CD8-positive, alpha-beta memory T cell (primary cell): ENCODE measurements at regions of chr7 and their contacts with region 1.

Region 1: GRCh38 chr7:8190119-8190895 is 71.7 kb downstream of the ICA1 start:
- DNase-seq: peak; percentile 38 to 74 (median 54)
- H3K4me3 ChIP-seq: no peak overlapping the region
- H3K4me3 Mint-ChIP-seq: no peak overlapping the region
- H3K27ac ChIP-seq: no peak overlapping the region
- H3K27ac Mint-ChIP-seq: no peak overlapping the region
- H3K4me1 ChIP-seq: peaks cover 9% of the 10 kb centered on the region
- H3K4me1 Mint-ChIP-seq: peaks cover 18 to 28% (median 23%) of the 10 kb centered on the region in 3 donors
- H3K27me3 ChIP-seq: no peaks in the 10 kb centered on the region
- H3K27me3 Mint-ChIP-seq: peaks cover 0 to 9% of the 10 kb centered on the region in 2 donors

Region 2: DNA sequence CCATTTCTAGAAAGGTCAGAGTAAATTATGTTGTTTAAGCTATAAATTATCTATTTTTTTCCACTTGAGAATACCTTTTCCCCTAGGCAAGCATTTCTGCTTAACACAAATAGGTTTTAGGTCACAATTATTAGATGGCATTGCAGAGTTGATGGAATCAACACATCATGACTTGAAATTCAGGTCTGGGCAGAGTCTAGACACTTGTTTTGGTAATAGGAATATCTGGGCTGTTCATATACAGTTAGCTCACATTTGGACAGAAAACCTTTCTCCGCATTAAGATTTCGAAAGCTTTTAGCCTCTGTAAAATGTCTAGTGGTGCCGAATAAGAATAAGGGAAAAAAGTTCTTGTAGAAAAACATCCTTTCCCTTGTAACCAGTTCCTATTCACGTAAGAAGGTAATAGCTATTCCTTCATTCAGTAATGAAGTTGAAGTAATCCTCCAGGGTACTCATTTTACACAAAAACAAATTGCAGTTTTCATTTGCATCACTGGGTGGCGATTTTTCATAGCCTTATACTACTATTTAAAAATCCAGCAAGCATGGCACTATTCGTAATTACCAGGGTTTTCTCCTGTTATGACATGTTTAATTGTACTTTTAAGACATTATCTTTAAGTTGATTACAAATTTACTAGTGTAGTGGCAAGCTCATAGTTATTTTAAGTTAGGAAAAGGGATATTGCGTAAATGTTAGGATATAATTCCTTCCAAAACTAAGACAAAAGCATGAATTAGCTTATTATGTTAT is 508.9 kb before region 1 on chr7:
- CTCF ChIA-PET with region 1: interaction called, 16 read pairs
- POLR2A ChIA-PET with region 1: interaction called, 3 read pairs
- DNase-seq: peak in 3 of 5 donors; percentile 14 to 47 (median 41)
- H3K4me3 ChIP-seq: no peak overlapping the region
- H3K4me3 Mint-ChIP-seq: peak overlapping the region in 2 of 7 donors; percentile 16 to 35
- H3K27ac ChIP-seq: no peak overlapping the region
- H3K27ac Mint-ChIP-seq: peak overlapping the region in 5 of 8 donors; percentile 6 to 69 (median 30)
- H3K4me1 ChIP-seq: peaks cover 8% of the 10 kb centered on the region
- H3K4me1 Mint-ChIP-seq: peaks cover 30 to 39% (median 31%) of the 10 kb centered on the region in 3 donors
- H3K27me3 ChIP-seq: no peaks in the 10 kb centered on the region
- H3K27me3 Mint-ChIP-seq: no peaks in the 10 kb centered on the region

Region 3: DNA sequence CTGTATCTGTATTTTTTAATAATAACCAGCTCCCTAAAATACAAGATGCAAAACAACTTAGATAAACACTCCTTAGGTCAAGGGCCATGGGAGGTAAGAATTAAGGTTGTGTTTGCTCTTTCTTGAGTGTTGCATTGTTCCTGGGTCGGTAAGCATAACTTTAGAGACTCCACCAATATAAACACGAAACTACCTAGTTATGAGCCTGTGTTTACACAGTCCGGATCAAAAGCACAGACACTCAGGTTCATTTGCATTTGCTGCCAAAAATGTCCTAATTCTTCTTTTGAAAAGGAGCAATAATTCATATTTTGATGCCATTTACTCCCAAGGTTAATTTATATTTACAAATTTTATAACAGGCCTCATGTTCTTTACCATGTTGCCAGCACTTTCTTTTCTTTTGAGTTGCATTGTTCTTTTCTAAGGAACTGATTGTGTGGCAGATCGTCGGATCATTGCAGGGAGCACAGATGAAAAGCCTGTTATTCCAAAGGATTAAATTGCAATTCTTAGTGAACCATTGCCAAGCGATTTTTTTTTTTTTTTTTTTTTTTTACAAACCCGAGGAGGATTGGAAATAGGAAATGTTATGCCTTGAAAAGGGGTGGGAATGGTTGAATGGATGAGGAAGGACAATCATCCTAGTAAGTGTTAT is 267.4 kb before region 1 on chr7:
- CTCF ChIA-PET with region 1: no interaction called
- POLR2A ChIA-PET with region 1: interaction called, 19 read pairs
- DNase-seq: no peak
- H3K4me3 ChIP-seq: no peak overlapping the region
- H3K4me3 Mint-ChIP-seq: peak overlapping the region in 1 of 7 donors; percentile 17
- H3K27ac ChIP-seq: no peak overlapping the region
- H3K27ac Mint-ChIP-seq: peak overlapping the region in 1 of 8 donors; percentile 22
- H3K4me1 ChIP-seq: no peaks in the 10 kb centered on the region
- H3K4me1 Mint-ChIP-seq: peaks cover 29 to 54% (median 49%) of the 10 kb centered on the region in 3 donors
- H3K27me3 ChIP-seq: no peaks in the 10 kb centered on the region
- H3K27me3 Mint-ChIP-seq: no peaks in the 10 kb centered on the region

Region 4: GRCh38 chr7:7944619-7945282 is 245.6 kb before region 1 on chr7:
- CTCF ChIA-PET with region 1: no interaction called
- POLR2A ChIA-PET with region 1: no interaction called
- DNase-seq: peak; percentile 21 to 73 (median 54)
- H3K4me3 ChIP-seq: peak overlapping the region; percentile 48
- H3K4me3 Mint-ChIP-seq: peak overlapping the region; percentile 47 to 87 (median 80)
- H3K27ac ChIP-seq: peak overlapping the region; percentile 43
- H3K27ac Mint-ChIP-seq: peak overlapping the region; percentile 84 to 98 (median 94)
- H3K4me1 ChIP-seq: peaks cover 36% of the 10 kb centered on the region
- H3K4me1 Mint-ChIP-seq: peaks cover 45 to 48% (median 47%) of the 10 kb centered on the region in 3 donors
- H3K27me3 ChIP-seq: no peaks in the 10 kb centered on the region
- H3K27me3 Mint-ChIP-seq: peaks cover 0 to 1% of the 10 kb centered on the region in 2 donors

Region 5: DNA sequence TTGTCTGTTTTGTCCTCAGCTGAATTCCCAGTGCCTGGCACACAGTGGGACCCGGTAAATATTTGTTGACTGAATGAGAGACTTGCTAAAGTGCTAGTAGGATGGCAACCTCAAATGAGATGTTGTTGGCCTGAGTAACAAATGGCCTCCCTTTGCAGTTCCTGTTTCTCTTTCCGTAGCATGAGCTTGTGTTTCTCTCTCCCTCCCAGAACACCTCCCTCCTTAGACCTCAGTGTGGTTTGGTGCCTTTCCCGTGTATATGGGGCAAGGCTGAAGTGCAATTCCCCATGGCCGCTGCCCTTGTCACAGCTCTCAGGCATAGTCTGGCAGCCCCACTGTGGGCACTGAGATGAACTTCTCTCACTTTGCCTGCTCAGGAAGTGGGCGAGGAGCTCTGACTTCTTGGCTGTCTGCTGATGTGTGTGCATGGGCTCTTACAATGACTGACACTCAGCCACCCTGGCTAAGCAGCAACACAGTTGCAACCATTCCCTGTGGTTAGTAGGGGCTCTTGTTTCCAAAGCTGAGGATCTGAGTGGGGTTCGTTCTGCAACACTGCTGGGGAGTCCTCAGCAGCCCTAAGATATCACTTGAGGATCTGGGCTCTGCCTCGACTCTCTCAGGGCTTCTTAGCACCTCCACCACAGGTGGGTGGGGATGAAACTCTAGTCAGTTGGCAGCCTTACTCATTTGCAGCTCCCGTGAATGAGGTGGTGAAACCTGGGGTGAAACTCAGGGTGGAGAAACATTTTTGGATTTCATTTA is 64.4 kb before region 1 on chr7:
- CTCF ChIA-PET with region 1: interaction called, 10 read pairs
- POLR2A ChIA-PET with region 1: interaction called, 5 read pairs
- DNase-seq: peak; percentile 74 to 91 (median 79)
- H3K4me3 ChIP-seq: peak overlapping the region; percentile 40
- H3K4me3 Mint-ChIP-seq: peak overlapping the region; percentile 5 to 85 (median 70)
- H3K27ac ChIP-seq: peak overlapping the region; percentile 40
- H3K27ac Mint-ChIP-seq: peak overlapping the region; percentile 89 to 99 (median 97)
- H3K4me1 ChIP-seq: peaks cover 83% of the 10 kb centered on the region
- H3K4me1 Mint-ChIP-seq: peaks cover 72 to 94% (median 87%) of the 10 kb centered on the region in 3 donors
- H3K27me3 ChIP-seq: no peaks in the 10 kb centered on the region
- H3K27me3 Mint-ChIP-seq: no peaks in the 10 kb centered on the region

Region 6: GRCh38 chr7:8176370-8177081 is 13.8 kb before region 1 on chr7:
- CTCF ChIA-PET with region 1: interaction called, 26 read pairs
- POLR2A ChIA-PET with region 1: interaction called, 5 read pairs
- DNase-seq: peak; percentile 28 to 83 (median 68)
- H3K4me3 ChIP-seq: peak overlapping the region; percentile 35
- H3K4me3 Mint-ChIP-seq: peak overlapping the region; percentile 49 to 85 (median 70)
- H3K27ac ChIP-seq: peak overlapping the region; percentile 48
- H3K27ac Mint-ChIP-seq: peak overlapping the region; percentile 91 to 98 (median 95)
- H3K4me1 ChIP-seq: peaks cover 47% of the 10 kb centered on the region
- H3K4me1 Mint-ChIP-seq: peaks cover 59 to 76% (median 63%) of the 10 kb centered on the region in 3 donors
- H3K27me3 ChIP-seq: no peaks in the 10 kb centered on the region
- H3K27me3 Mint-ChIP-seq: no peaks in the 10 kb centered on the region

Region 7: GRCh38 chr7:8201846-8202441 is 11.6 kb after region 1 on chr7:
- CTCF ChIA-PET with region 1: no interaction called
- POLR2A ChIA-PET with region 1: no interaction called
- DNase-seq: no peak
- H3K4me3 ChIP-seq: no peak overlapping the region
- H3K4me3 Mint-ChIP-seq: no peak overlapping the region
- H3K27ac ChIP-seq: no peak overlapping the region
- H3K27ac Mint-ChIP-seq: peak overlapping the region in 2 of 8 donors; percentile 28 to 65
- H3K4me1 ChIP-seq: peaks cover 11% of the 10 kb centered on the region
- H3K4me1 Mint-ChIP-seq: peaks cover 21 to 34% (median 26%) of the 10 kb centered on the region in 3 donors
- H3K27me3 ChIP-seq: no peaks in the 10 kb centered on the region
- H3K27me3 Mint-ChIP-seq: no peaks in the 10 kb centered on the region